Posterior cingulate gyrus (tissue), 11 donors: ENCODE measurements at regions of chr1 and their contacts with region 1.

Region 1: DNA sequence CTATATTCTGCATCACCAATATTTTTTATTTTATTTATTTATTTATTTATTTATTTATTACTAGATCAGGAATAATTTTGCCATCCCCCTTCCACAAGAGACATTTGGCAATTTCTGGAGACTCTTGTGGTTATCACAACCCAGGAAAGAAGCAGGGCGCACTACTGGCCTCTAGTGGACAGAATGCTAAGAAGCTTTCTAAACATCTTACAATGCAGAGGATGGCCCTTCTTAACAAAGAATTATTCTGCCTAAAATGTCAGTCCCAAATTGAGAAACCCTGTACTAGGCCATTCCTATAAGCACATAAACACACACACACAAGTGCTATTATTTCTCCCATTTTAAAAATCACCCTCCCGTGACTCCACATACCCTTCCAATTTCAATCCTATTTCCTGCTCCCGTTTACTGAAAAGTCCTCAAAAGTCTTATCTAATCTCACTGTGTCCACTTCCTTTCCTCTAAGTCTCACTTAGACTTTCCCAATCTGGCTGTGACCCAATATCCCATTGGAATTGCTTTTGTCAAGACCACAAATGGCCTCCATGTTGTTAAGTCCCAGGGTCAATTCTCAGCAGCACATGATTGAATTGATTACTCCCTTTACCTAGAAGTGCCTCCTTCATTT is 43.7 kb upstream of the RNF11 start:
- DNase-seq: peak in 8 of 10 donors; percentile 33 to 91 (median 68)

Region 2: GRCh38 chr1:50368179-50369012 is 823.9 kb before region 1 on chr1:
- intact Hi-C with region 1: loop called (anchors 5 kb)
- DNase-seq: peak in 8 of 10 donors; percentile 42 to 89 (median 58)

Region 3: DNA sequence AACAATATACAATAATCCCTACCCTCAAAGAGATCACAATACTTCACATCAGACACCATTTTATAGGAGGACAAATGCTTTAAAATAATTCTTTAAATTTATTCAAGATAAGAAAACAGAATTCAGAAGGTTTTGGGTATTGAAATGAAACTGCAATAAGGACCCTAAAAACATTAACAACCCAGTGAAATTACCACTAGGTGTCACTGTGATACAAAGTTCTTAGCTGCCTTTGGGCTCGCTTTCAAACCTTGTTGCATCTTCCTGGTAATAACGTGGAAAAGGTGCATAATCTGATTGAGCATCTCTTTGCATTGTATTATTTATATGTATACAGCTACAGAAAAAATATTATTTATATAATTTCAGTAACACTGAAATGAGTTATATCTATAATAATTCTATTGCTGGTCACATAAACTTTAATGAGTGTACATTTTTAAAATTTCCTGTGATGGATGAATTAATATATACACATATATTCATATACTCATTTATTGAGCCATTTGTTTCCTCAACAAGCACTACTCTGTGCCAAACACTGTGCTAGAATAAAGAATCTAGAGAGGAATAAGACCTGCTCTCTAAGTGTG is 417.5 kb before region 1 on chr1:
- intact Hi-C with region 1: loop called (anchors 2 kb)
- DNase-seq: no peak

Region 4: DNA sequence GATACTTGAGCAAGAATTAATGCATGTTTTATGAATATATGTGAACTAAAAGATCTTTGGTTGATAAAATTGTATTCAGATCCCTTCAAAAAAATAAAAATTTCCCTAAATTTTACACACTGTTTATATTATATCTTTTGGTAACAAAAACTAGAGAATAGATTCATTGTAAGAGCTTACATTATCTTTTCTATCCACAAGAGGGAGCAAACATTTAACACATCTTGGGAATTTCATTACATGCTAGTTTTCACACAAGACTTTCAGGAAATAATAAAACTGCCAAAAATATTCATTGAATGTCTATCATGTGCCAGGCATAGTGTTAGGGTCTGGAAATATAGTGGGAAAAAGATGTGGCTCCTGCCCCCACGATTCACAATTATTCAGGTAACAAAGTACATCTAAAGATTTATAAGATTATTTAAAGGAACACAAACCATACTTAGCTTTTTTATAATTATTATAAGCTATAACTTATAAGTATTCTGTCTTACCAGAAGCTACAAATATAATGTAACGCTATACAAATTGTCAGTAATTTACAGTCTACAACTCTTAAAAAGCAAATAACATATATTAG is 262.9 kb before region 1 on chr1:
- intact Hi-C with region 1: loop called (anchors 2 kb)
- DNase-seq: no peak

Region 5: DNA sequence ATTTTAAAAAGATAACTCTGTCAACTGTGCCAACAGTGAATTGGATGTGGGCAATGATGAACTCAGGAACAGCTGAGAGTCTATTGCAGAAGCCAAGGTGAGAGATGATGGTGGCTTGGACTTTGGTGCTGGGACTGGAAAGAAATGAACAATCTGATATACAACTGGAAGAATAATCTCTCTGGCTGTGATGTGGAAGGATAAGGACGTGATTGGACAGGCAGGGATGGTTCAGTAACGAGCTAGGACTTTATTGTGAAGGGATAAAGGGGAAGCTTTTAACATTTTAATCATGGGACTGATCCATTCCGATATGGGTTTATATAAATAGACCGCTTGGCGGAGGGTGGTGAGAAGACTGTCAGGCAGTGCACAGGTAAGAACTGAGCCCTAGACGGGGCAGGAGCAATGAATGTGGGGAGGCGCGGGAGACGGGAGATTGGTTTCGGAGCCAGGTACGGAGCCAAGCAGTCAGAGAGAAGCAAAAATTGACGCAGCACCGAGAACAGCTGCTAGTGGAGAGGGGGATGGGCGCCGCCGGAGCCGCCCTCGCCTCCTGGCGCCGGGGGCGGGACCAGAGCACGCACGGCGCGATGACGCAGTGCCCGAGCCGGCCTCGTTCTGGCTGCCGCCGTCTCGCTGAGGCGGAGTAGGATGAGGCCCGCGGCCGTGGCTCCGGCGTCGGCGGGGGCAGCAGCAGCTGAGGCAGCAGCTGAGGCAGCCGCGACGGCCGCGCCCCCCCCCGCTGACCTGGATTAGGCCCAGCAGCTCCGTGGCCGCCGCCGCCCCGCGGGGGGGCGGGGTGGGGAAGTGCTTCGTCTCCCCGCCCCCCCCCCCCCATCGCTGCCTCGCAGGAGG is 43.6 kb after region 1 on chr1 and contains the start of gene RNF11:
- intact Hi-C with region 1: loop called (anchors 2 kb)
- DNase-seq: peak; percentile 89 to 99 (median 92)

Region 6: GRCh38 chr1:51296383-51297357 is 104.3 kb after region 1 on chr1:
- intact Hi-C with region 1: loop called (anchors 2 kb)
- DNase-seq: peak; percentile 75 to 98 (median 86)

Region 7: DNA sequence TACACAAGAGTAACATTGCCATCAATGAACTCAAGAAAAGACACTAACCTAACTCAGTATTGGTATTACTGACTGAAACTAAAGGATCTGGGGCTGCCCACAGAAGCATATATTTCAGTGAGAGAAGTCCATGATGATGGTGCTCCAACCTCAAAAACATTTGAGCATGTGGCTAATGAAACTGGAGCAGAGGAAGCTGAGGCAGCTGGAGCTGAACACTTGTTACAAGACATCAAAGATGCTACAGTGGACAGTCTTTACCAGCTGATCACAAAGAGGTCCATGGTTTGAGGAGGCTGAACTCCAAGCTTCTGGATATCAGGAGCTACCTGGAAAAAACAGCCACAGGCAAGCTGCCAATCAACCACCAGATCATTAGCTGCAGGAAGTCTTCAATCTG is 180.2 kb after region 1 on chr1:
- intact Hi-C with region 1: no loop called
- DNase-seq: no peak